Activated CD8-positive, alpha-beta T cell treated with anti-CD3 and anti-CD28 coated beads for 36 hours (primary cell): ENCODE measurements at regions of chr17 and their contacts with region 1.

Region 1: GRCh38 chr17:57783106-57783742 is 38.1 kb upstream of the CCDC182 start:
- DNase-seq: peak; percentile 87
- ATAC-seq: peak; percentile 98
- H3K4me3 Mint-ChIP-seq: no peak overlapping the region
- H3K27ac Mint-ChIP-seq: no peak overlapping the region
- H3K4me1 Mint-ChIP-seq: no peaks in the 10 kb centered on the region
- H3K27me3 Mint-ChIP-seq: peaks cover 8% of the 10 kb centered on the region
- CTCF ChIP-seq: peak; percentile 98

Region 2: DNA sequence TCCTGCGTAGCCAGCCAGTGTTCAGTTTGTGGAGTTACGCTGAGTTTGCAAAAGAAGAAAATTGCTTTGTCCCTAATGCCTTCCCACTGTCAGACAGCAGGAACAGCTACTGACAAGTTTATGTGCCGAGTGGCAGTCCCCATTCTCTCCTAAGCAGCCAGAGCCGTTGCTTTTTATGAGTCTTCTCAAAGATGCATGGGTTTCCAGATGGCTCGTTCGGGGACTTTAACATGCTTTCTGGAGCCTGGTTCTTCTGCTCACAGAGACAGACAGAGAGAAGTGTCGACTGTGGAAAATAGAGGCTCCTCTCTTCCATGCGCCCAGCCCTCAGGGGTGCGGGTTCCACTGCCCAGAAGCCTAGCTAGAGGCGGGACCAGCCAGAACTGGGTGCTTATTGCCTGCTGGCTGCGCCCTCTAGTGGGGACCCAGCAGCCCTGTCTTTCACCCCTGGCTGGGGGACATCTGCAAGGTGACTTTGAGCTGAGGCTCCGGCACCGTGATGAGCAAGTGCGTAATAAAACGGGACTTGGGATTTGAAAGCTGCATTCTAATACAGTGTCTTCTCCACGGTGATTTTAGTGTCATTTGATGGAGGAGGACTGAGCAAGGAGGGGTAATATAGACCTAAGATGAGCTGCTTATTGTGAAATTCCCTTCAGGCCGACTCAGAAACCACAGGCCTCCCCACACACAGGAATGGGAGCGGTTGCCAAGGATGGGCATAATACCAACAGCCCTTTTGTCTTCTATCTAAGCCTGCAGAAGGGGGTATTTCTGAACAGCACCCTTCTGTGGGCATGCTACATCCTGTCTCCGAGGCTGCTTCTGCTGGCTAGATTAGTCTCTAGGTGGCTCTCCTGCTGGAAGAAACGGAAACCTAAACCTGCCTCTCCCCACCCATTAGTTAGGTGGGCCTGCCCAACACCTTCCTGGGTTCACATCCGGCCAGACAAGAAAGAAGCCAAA is 111.3 kb before region 1 on chr17:
- CTCF ChIA-PET with region 1: interaction called, 14 read pairs
- POLR2A ChIA-PET with region 1: no interaction called
- intact Hi-C with region 1: no loop called
- DNase-seq: peak; percentile 82
- ATAC-seq: peak; percentile 87
- H3K4me3 Mint-ChIP-seq: no peak overlapping the region
- H3K27ac Mint-ChIP-seq: peak overlapping the region; percentile 86
- H3K4me1 Mint-ChIP-seq: peaks cover 37% of the 10 kb centered on the region
- H3K27me3 Mint-ChIP-seq: no peaks in the 10 kb centered on the region
- CTCF ChIP-seq: peak; percentile 94

Region 3: DNA sequence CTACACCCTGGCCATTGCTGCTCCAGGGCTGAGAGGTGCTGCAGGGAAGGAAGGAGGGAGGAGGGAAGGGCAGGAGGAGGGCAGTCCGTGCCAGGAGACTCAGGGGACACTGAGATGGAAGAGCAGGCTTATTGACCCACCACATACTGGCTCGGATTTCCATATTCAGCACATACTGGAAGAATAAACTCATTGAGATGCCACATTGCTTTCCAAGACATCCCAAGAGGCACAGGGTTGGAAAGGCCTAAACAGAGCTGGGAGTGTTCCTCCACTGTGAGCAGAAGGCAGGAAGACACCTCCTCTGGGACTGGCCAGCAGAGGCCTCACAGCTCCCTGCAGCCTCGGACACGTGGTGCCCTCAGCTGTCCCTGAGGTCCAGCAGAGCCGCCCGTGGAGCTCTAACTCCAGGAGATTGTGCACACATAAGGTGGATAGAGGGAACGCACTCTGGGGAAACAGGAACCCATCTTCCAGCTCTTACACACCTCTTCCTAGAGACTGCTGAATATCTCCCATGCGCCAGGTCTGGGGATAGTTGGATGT is 55.5 kb before region 1 on chr17:
- CTCF ChIA-PET with region 1: no interaction called
- POLR2A ChIA-PET with region 1: no interaction called
- intact Hi-C with region 1: no loop called
- DNase-seq: no peak
- ATAC-seq: no peak
- H3K4me3 Mint-ChIP-seq: no peak overlapping the region
- H3K27ac Mint-ChIP-seq: no peak overlapping the region
- H3K4me1 Mint-ChIP-seq: no peaks in the 10 kb centered on the region
- H3K27me3 Mint-ChIP-seq: no peaks in the 10 kb centered on the region
- CTCF ChIP-seq: no peak

Region 4: DNA sequence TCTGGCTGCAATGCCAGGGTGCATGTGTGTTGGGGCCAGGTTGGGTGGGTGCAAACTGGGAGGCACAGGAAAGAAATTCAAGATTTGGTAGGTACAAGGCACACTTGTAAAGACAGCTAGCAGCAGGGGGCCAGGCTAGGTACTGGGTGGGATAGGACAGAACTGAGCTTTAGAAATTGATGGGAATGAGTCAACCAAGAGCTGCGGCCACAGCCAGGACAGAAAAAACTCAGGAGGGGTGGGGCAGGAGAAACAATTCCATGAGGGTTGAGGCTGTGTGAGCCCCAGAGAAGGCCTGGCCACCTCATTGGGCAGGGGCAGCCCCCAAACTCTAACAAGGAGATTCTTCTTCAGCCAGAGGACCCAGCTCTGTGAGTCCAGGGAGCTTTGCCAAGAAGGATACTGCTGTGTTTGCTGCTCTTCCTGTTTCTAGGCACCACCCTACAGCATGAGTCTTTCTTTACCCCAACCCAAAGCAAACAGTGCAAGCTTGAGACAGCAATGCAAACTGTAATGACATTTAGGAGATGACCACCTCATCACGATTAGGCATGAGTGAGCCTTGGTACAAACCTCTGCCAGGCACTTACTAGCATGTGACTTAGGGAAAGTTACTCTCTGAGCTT is 16.8 kb before region 1 on chr17:
- CTCF ChIA-PET with region 1: interaction called, 37 read pairs
- POLR2A ChIA-PET with region 1: no interaction called
- intact Hi-C with region 1: no loop called
- DNase-seq: no peak
- ATAC-seq: no peak
- H3K4me3 Mint-ChIP-seq: no peak overlapping the region
- H3K27ac Mint-ChIP-seq: no peak overlapping the region
- H3K4me1 Mint-ChIP-seq: no peaks in the 10 kb centered on the region
- H3K27me3 Mint-ChIP-seq: peaks cover 3% of the 10 kb centered on the region
- CTCF ChIP-seq: no peak

Region 5: DNA sequence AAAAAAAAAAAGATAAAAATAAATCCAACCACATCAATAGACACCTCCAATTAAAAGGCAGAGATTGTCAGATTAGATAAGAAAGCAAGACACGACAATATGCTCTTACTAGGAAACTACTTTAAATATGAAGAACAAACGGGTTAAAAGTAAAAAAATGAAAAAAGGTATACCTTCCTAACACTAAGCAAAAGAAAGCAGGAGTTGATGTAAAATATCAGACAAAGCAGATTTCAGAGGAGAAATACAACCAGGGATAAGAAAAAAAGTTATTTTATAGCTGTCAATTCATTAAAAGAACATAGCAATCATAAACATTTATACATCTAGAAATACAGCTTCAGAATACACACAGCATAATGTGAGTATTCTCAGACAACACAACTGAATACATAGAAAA is 11.6 kb after region 1 on chr17:
- CTCF ChIA-PET with region 1: interaction called, 16 read pairs
- POLR2A ChIA-PET with region 1: interaction called, 3 read pairs
- intact Hi-C with region 1: no loop called
- DNase-seq: no peak
- ATAC-seq: no peak
- H3K4me3 Mint-ChIP-seq: no peak overlapping the region
- H3K27ac Mint-ChIP-seq: no peak overlapping the region
- H3K4me1 Mint-ChIP-seq: no peaks in the 10 kb centered on the region
- H3K27me3 Mint-ChIP-seq: peaks cover 9% of the 10 kb centered on the region
- CTCF ChIP-seq: no peak

Region 6: DNA sequence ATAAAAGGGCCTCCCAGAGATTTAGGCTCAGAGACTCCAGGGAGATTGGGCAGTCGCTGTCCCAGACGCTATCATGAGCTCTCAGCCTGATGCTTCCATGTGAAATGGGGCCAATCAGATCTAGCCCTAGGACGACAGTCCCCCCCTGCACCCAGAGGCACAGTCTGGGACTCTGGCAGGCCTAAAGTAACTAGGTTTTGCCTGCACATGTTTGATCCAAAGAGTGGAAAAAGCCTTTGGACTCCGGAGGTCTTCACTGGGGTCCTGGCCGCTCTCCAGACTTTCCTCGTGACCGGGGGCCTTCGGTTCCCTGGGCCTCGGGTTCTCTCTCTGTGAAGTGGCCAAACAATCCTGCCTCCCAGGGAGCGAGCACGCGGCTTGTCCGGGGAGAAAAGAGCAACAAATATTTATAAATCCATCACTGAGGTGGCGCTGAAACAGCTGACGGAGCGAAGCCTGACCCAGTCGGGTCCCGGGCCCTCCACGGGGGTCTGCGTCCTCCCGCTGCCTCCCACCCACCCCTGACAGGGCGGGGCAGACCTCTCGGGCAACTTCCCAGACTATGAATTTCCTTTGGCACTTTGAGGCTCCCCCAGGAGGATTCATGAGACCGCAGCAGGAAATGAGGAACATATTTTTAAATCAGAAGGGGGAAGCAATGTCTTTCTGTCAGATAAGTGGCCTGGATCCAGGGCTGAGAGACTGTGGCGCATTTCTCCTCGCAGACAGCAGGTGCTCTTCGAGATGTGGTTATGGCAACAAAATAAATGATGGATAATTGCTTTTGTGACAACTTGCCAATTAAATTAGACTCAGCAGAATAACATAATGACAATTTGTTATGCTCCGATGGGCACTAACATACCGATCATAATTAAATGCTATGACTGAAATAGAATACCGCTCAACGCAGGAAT is 27.8 kb after region 1 on chr17:
- CTCF ChIA-PET with region 1: interaction called, 25 read pairs
- POLR2A ChIA-PET with region 1: no interaction called
- intact Hi-C with region 1: no loop called
- DNase-seq: no peak
- ATAC-seq: no peak
- H3K4me3 Mint-ChIP-seq: no peak overlapping the region
- H3K27ac Mint-ChIP-seq: no peak overlapping the region
- H3K4me1 Mint-ChIP-seq: peaks cover 12% of the 10 kb centered on the region
- H3K27me3 Mint-ChIP-seq: peaks cover 36% of the 10 kb centered on the region
- CTCF ChIP-seq: no peak